Ascending aorta (tissue), 2 donors: ENCODE measurements at regions of chr10 and their contacts with region 1.

Region 1: DNA sequence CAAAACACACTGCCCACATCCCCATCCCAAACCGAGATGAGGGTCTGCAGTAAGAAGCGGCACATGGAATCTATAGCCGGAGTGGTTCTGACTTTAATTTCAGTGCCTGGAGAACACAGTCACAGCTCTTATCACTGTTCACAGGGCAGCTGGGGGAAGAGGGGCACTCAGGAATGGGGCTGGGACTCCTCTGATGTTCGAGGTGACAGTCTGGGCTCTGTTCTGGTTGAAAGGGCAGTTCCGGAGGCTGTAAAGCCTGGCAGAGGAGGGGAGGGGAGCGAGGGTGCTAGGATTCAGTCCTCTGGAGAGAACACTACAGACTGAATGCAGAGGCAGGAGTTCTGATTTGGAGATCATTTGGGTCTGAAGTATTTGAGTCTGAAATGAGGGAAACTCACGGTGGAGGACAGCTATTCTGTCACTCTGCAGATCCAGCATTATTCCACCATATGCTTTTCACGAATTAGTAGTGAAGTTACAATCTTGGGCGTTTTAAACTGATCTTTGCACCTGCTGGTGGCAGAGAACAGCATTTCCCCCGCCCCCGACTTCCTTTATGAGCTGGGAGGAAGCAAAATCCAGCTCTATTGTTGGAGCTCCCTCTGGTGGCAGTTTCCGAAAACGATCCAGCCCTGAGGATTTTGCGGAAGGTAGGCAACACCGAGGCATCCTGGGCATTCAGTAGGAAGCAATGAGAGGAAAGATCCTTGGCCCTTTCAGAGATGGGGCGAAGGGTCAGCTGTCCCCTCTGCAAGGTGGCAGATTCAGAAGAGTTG is 22.7 kb upstream of the KCNK18 start:
- DNase-seq: peak in 1 of 2 donors; percentile 88
- H3K4me3 ChIP-seq: peak overlapping the region; percentile 59 to 60
- H3K27ac ChIP-seq: no peak overlapping the region
- H3K4me1 ChIP-seq: peaks cover 6% of the 10 kb centered on the region in 2 donors
- H3K27me3 ChIP-seq: no peaks in the 10 kb centered on the region
- CTCF ChIP-seq: peak; percentile 60 to 89 (median 76)

Region 2: DNA sequence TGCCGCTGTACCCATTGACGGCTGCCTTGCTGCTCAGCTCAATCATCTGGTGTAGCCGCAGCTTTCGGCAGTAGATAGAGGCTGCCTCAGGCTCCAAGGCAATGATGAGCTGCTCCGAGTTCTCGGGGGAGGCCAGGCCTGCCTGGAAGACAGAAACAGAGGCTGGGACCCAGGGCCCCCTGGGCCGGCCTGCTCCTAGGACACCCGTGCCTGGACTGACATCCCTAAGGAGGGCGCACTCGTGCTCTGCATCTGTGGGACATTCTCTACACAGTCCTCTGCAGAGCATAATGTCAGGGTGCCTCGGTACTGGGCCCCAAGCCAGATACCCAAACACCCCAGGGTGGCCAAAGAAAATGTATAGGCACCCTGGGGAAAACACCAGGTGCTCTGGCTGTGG is 490.8 kb before region 1 on chr10:
- intact Hi-C with region 1: loop called (anchors 5 kb)
- DNase-seq: no peak
- H3K4me3 ChIP-seq: no peak overlapping the region
- H3K27ac ChIP-seq: no peak overlapping the region
- H3K4me1 ChIP-seq: peaks cover 6 to 8% of the 10 kb centered on the region in 2 donors
- H3K27me3 ChIP-seq: no peaks in the 10 kb centered on the region
- CTCF ChIP-seq: no peak

Region 3: GRCh38 chr10:116796910-116797513 is 377.6 kb before region 1 on chr10:
- intact Hi-C with region 1: loop called (anchors 1 kb)
- DNase-seq: no peak
- H3K4me3 ChIP-seq: no peak overlapping the region
- H3K27ac ChIP-seq: no peak overlapping the region
- H3K4me1 ChIP-seq: no peaks in the 10 kb centered on the region
- H3K27me3 ChIP-seq: no peaks in the 10 kb centered on the region
- CTCF ChIP-seq: peak; percentile 76 to 92 (median 84)

Region 4: GRCh38 chr10:117005027-117005526 is 169.6 kb before region 1 on chr10 and contains the start of gene SHTN1:
- intact Hi-C with region 1: loop called (anchors 10 kb)
- DNase-seq: peak; percentile 18 to 76
- H3K4me3 ChIP-seq: peak within 1 kb of the TSS; percentile 68 to 97
- H3K27ac ChIP-seq: peak within 1 kb of the TSS; percentile 70 to 79
- H3K4me1 ChIP-seq: peaks cover 0 to 3% of the 10 kb centered on the region in 2 donors
- H3K27me3 ChIP-seq: no peaks in the 10 kb centered on the region
- CTCF ChIP-seq: no peak
- total RNA-seq, gene SHTN1: 3.0 TPM